Activated CD4-positive, alpha-beta T cell treated with anti-CD3 and anti-CD28 coated beads for 36 hours (primary cell): ENCODE measurements at regions of chr6 and their contacts with region 1.

Region 1: DNA sequence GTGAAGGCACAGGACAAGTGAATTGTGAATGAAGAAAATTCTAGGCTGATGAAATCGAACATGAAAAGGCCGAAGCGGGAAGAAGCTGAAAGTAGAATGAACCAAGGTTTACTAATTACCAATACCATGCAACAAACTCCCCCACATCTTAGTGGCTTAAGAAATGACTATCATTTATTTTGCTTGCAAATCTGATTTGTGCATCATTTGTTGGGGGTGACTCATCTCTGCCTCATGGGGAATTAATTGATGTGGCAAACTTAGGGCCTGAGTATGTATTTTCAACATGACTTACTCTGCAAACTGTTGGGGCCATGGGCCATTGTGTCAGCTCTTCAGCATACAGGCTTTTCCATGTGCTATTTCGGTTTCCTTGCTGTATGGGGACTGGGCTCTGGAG is 26.8 kb downstream of the PPP1R14C start:
- DNase-seq: peak; percentile 73
- ATAC-seq: peak; percentile 98
- H3K4me3 Mint-ChIP-seq: no peak overlapping the region
- H3K27ac Mint-ChIP-seq: peak overlapping the region; percentile 69
- H3K4me1 Mint-ChIP-seq: peaks cover 17% of the 10 kb centered on the region
- H3K27me3 Mint-ChIP-seq: peaks cover 22% of the 10 kb centered on the region

Region 2: DNA sequence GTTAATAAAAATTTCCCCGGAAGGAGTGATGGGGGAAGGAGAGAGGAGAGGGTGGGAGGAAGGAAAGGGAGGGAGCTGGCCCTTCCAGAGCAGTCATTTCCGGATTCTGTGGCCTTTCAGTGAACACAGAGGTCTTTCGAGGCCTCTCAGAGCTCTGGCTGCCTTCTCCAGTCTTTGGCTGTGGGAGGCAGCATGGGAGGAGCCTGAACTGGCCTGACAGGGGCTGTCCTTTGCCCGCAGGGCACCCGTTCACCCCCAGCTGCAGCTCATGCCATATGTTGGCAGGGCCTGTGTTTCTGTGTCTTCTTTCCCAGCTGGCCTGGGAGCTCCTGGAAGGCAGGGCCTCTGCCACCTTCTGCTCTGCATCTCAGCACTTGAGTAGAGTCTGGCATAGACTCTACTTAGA is 68.7 kb after region 1 on chr6:
- CTCF ChIA-PET with region 1: interaction called, 3 read pairs
- POLR2A ChIA-PET with region 1: interaction called, 6 read pairs
- intact Hi-C with region 1: loop called (anchors 1 kb)
- DNase-seq: no peak
- ATAC-seq: no peak
- H3K4me3 Mint-ChIP-seq: no peak overlapping the region
- H3K27ac Mint-ChIP-seq: no peak overlapping the region
- H3K4me1 Mint-ChIP-seq: peaks cover 32% of the 10 kb centered on the region
- H3K27me3 Mint-ChIP-seq: peaks cover 21% of the 10 kb centered on the region

Region 3: DNA sequence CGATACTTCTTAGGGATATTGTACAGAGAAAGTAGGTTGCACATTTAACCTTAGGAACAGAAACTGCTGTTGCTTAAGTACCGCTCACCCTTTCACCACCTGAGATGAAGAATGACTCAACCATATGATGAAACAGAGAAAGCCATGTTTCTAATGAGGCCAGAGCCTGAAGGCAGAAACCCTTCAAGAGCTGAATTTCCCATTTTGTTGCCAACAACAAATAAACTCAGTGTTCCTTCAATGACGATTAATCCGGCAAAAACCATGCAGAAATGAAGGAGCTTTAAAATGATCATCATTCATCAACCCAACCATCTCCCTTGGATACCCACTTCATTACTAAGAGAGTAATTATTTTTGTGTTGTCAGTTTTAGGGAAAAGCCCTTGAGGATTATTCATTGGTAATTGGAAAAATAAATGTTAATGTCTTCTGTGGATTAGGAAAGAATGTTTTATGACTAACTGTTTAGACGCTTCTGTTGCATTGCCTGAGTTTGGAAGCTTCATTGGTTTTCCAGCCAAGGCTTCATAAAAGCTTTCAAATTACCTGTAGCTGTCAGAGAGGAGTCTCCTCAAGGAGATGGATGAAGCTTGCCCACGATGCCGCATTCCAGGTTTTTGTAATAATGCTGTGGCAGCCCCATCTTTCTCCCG is 87.1 kb after region 1 on chr6:
- CTCF ChIA-PET with region 1: no interaction called
- POLR2A ChIA-PET with region 1: no interaction called
- intact Hi-C with region 1: loop called (anchors 1 to 5 kb)
- DNase-seq: no peak
- ATAC-seq: peak; percentile 83
- H3K4me3 Mint-ChIP-seq: no peak overlapping the region
- H3K27ac Mint-ChIP-seq: peak overlapping the region; percentile 10
- H3K4me1 Mint-ChIP-seq: peaks cover 30% of the 10 kb centered on the region
- H3K27me3 Mint-ChIP-seq: peaks cover 36% of the 10 kb centered on the region

Region 4: GRCh38 chr6:150301846-150302519 is 132.4 kb after region 1 on chr6:
- CTCF ChIA-PET with region 1: no interaction called
- POLR2A ChIA-PET with region 1: no interaction called
- intact Hi-C with region 1: loop called in 1 of 2 experiments (anchors 5 kb)
- DNase-seq: peak; percentile 46
- ATAC-seq: peak; percentile 99
- H3K4me3 Mint-ChIP-seq: no peak overlapping the region
- H3K27ac Mint-ChIP-seq: no peak overlapping the region
- H3K4me1 Mint-ChIP-seq: peaks cover 11% of the 10 kb centered on the region
- H3K27me3 Mint-ChIP-seq: peaks cover 34% of the 10 kb centered on the region